Activated CD4-positive, alpha-beta memory T cell treated with anti-CD3 and anti-CD28 coated beads for 36 hours (primary cell): ENCODE measurements at regions of chr10 and their contacts with region 1.

Region 1: DNA sequence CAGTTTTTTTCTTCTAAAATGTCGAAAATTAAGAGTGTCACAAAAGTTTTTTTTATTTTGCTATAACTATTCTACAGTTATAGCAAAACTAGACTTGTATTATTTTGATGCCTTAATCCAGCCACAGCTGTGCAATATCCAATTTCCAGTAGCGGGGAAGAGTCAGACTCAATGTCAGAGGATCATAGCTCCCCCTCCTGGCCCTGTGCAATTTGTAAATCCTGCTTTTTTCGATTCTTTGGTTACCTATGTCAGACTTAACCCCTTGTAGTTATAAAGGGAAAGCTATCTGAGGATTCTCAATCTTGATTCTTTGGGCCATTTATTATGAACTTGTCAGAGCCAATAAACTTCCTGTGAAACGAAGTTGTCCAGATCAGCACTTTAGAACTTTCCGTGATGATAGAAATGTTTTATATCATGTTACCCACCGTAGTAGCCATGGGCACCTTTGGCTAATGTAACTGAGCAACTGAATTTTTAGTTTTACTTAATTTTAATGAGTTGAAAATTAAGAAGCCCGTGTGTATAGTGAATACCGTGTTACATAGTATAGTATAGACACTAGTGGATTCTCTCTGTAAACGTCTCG is 87.7 kb upstream of the PRKCQ start:
- DNase-seq: peak; percentile 68
- H3K4me3 Mint-ChIP-seq: no peak overlapping the region
- H3K27ac Mint-ChIP-seq: peak overlapping the region; percentile 6
- H3K4me1 Mint-ChIP-seq: peaks cover 23% of the 10 kb centered on the region
- H3K27me3 Mint-ChIP-seq: no peaks in the 10 kb centered on the region

Region 2: GRCh38 chr10:6108603-6109443 is 559.0 kb before region 1 on chr10:
- CTCF ChIA-PET with region 1: no interaction called
- POLR2A ChIA-PET with region 1: no interaction called
- intact Hi-C with region 1: loop called (anchors 10 kb)
- DNase-seq: peak; percentile 36
- H3K4me3 Mint-ChIP-seq: no peak overlapping the region
- H3K27ac Mint-ChIP-seq: peak overlapping the region; percentile 76
- H3K4me1 Mint-ChIP-seq: peaks cover 36% of the 10 kb centered on the region
- H3K27me3 Mint-ChIP-seq: no peaks in the 10 kb centered on the region

Region 3: GRCh38 chr10:6314620-6315205 is 353.1 kb before region 1 on chr10:
- CTCF ChIA-PET with region 1: no interaction called
- POLR2A ChIA-PET with region 1: no interaction called
- intact Hi-C with region 1: no loop called
- DNase-seq: no peak
- H3K4me3 Mint-ChIP-seq: no peak overlapping the region
- H3K27ac Mint-ChIP-seq: no peak overlapping the region
- H3K4me1 Mint-ChIP-seq: peaks cover 7% of the 10 kb centered on the region
- H3K27me3 Mint-ChIP-seq: no peaks in the 10 kb centered on the region

Region 4: DNA sequence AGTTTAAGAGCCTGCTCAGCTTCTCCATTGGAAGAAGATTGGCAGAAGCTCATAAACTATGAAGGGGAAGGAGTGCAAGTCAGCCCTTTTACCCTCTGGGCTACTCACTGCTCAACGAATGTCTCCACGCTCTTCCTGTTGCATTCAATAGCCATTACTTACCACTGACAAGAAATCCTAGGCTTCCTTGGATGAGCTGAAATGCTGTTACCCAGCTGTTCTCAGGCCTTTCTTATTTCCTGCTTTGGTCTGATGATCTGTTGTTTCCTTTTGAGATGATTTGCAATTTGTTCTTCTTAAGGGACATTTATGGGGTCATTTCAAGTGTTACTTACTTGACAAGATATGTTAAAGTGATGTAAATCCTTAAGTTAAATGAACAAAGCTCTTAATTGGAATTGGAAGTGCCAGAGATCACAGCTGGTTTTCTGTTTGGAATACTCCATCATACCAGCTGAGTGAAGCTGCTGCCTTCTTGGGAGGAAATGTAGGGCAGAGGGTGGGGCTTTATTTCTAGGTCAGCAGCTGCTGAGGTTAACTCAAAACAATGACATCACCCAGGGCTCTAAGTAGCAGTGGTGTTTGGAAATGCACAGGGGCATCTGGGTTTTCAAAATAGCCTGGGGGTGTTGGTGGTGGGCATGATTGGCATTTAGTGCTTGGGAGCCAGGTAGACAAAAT is 257.7 kb before region 1 on chr10:
- CTCF ChIA-PET with region 1: interaction called, 49 read pairs
- POLR2A ChIA-PET with region 1: no interaction called
- intact Hi-C with region 1: no loop called
- DNase-seq: peak; percentile 55
- H3K4me3 Mint-ChIP-seq: peak overlapping the region; percentile 38
- H3K27ac Mint-ChIP-seq: peak overlapping the region; percentile 84
- H3K4me1 Mint-ChIP-seq: peaks cover 56% of the 10 kb centered on the region
- H3K27me3 Mint-ChIP-seq: no peaks in the 10 kb centered on the region

Region 5: DNA sequence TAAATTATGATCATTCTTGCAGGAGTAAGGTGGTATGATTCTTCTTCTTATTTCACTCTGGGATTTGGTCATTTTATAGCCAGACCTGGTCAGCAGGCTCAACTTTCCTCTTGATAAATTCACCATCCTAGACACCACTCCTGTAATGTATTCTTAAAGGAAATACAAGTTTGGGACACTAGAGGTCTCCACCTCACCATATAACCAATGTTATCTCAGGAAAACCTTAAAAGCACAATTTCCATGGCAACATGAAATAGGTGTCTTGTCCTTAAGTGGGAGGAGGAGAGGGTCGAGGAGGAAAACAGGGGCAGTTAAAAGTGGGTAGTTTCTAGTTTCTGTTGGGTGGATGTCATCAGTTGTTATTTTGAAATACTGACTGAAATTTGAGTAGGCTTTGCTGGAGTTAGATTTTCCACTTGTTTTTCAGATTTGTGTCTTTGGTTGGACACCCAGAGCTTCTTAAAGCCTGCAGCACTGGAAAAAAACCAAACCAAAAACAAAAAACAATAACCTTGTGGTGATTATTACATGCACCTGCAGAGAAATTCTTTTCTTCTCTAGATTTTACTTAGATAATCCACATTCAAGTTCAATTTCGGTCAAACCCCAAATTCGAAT is 250.8 kb before region 1 on chr10:
- CTCF ChIA-PET with region 1: interaction called, 49 read pairs
- POLR2A ChIA-PET with region 1: interaction called, 3 read pairs
- intact Hi-C with region 1: loop called (anchors 1 kb)
- DNase-seq: no peak
- H3K4me3 Mint-ChIP-seq: no peak overlapping the region
- H3K27ac Mint-ChIP-seq: no peak overlapping the region
- H3K4me1 Mint-ChIP-seq: no peaks in the 10 kb centered on the region
- H3K27me3 Mint-ChIP-seq: no peaks in the 10 kb centered on the region

Region 6: DNA sequence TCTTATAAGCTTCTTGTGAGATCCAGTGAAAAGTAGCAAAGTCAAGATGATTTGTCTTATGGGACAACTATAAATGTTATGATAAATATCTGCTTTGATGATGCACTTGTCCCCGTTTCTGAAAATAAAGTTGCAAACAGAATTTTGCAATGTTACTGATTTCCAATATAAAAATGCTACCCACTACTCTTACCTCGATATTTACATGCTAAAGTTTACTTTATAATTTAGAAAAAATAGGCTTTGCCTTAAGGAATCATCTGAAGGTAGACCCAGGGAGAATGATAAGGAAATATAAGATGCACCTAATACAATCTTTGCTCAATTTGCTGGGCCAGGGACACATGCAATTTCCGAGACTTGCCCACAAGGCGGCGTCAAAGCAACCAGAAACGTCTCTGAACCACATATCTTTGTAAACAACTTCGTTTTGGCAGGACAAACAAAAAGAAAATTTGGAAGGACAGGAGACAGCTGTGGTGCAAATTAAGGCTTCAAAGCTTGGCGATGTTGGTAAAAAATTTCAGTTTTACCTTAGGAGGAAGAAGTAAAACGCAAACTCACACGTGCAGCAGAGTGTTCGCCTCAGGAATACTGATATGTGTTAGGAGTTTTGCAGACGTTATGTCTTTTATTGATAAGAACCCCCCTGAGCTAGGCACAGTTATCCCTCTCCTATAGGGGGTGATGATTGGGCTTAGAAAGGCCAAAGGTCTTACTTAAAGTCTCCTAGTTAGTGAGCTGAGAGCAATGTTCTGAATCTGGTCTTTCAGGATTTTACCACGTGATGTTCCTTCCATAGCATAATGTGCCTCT is 222.1 kb before region 1 on chr10:
- CTCF ChIA-PET with region 1: interaction called, 10 read pairs
- POLR2A ChIA-PET with region 1: no interaction called
- intact Hi-C with region 1: no loop called
- DNase-seq: peak; percentile 76
- H3K4me3 Mint-ChIP-seq: no peak overlapping the region
- H3K27ac Mint-ChIP-seq: peak overlapping the region; percentile 58
- H3K4me1 Mint-ChIP-seq: peaks cover 39% of the 10 kb centered on the region
- H3K27me3 Mint-ChIP-seq: no peaks in the 10 kb centered on the region

Region 7: DNA sequence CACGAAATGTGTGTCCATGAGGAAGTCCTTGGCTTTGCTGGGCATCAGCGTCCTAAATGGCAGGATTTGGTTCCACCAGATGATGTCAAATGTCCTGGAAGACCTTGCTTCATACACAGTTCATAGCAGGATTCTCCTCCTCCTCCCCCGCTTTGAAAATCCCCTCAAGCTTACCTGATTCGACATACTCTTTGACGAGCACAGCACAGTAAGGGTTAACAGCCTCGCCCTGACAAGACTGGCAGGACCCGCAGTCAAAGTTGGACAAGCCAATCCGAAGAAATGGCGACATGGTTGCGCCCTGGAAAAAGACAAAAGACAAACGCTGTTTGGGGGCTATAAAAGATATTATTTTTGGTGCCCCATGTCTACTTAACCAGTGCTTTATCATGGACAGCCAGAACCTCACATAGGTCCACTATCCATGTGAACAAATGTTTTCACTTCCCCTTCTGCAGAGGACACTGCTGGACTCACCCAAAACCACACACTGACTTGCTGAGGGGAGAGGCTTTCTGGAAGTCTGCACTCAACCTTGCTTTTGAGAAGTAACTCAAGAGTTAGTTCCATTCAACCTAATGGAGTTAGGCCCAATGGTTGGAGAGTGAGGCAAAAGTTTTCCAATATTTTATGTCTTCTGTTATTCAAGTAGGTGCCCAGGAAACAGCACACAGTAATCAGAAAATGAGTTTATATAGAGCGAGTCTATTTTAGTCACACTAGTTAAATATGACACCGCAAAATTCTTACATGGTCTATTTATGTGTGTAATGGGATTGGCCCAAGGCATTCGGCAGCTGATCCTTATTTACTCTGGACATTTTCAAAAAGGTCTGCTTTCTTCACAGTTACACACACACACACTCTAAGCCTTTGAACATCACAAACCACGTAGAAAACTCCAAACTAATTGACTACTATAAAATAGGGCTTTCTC is 152.7 kb before region 1 on chr10:
- CTCF ChIA-PET with region 1: no interaction called
- POLR2A ChIA-PET with region 1: no interaction called
- intact Hi-C with region 1: loop called (anchors 5 kb)
- DNase-seq: no peak
- H3K4me3 Mint-ChIP-seq: no peak overlapping the region
- H3K27ac Mint-ChIP-seq: peak overlapping the region; percentile 14
- H3K4me1 Mint-ChIP-seq: peaks cover 85% of the 10 kb centered on the region
- H3K27me3 Mint-ChIP-seq: no peaks in the 10 kb centered on the region

Region 8: GRCh38 chr10:6635784-6636183 is 32.0 kb before region 1 on chr10:
- CTCF ChIA-PET with region 1: no interaction called
- POLR2A ChIA-PET with region 1: no interaction called
- intact Hi-C with region 1: no loop called
- DNase-seq: no peak
- H3K4me3 Mint-ChIP-seq: peak overlapping the region; percentile 5
- H3K27ac Mint-ChIP-seq: peak overlapping the region; percentile 72
- H3K4me1 Mint-ChIP-seq: peaks cover 34% of the 10 kb centered on the region
- H3K27me3 Mint-ChIP-seq: no peaks in the 10 kb centered on the region

Region 9: GRCh38 chr10:8296090-8296733 is 1628.4 kb after region 1 on chr10:
- CTCF ChIA-PET with region 1: no interaction called
- POLR2A ChIA-PET with region 1: no interaction called
- intact Hi-C with region 1: no loop called
- DNase-seq: no peak
- H3K4me3 Mint-ChIP-seq: no peak overlapping the region
- H3K27ac Mint-ChIP-seq: no peak overlapping the region
- H3K4me1 Mint-ChIP-seq: peaks cover 9% of the 10 kb centered on the region
- H3K27me3 Mint-ChIP-seq: no peaks in the 10 kb centered on the region